PC-3 (cell line): ENCODE measurements at regions of chr20 and their contacts with region 1.

Region 1: DNA sequence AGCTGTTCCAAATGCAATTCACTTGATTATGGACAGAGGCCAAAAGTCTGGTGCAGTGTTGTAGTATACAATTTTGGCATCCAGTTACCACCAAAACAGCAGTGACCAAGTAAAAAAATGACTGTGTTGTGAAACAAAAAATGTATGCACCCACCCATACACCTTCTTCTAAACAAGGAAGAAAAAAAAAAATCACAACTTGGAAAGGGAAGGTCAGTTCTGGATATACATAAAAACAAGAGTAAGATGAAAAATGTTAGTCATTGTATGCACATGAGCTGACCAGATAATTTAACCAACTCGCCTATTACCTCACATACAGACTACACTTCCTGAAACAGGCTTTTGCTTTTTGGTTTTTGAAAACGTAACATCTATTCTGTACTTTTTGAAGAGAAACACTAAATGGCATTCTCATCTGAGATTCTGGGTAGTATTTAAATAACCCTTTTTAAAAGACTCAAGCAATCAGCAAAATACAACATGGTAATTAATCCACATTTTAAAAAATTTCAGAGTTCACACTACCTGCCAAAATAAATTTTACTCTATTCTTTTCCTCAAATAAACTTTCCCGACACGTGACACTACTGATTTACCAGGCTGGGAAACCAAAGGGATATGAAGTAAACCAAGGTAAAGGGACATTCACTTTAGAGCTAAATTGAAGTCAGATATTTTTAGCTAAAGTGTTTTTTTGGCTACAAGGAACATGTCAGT is 141.6 kb upstream of the SHLD1 start:
- DNase-seq: peak; percentile 63
- ATAC-seq: 0 out of 2 replicates have a peak, but pooled peaks have one; percentile 6
- H3K4me3 ChIP-seq: peak overlapping the region; percentile 77
- H3K27ac ChIP-seq: peak overlapping the region; percentile 71
- H3K4me1 ChIP-seq: peaks cover 40% of the 10 kb centered on the region
- H3K27me3 ChIP-seq: no peaks in the 10 kb centered on the region
- CTCF ChIP-seq: no peak

Region 2: DNA sequence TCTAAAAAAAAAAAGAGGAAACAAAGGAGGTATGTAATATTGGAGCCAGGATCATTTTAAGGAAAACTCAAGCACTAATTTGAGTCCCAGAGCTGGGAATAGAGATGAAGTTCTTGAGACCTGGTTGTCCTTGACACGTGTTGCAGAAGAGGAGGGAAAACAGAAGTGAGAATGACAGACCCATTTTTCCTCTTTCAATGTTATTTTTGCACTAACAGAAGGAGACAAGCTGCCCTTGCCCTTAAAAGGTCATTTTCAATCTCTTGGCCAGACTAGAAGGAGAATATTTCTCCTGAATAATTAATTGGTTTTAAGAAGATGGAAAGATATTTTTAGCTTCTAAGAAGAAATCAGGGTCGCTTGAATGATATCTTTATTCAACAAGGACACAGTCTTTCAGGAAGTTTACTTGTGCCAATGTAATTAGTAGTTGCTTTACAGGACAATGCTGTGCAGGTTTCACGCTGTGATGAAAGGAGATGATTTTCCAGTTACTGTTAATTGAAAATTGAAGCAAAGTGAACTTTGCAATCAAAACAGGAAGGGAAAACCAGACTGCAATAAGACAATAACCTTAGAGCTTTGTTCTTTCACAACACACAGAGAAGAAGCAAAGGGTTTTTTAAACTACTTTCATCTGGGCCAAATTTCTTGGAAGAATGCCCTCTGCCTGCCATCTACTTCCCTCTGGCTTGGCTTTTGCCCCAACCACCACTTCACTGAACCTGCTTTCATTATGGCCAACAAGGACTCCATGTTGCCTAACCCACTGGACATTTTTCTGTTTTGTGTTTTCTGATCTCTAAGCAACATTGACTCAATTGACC is 33.8 kb after region 1 on chr20:
- CTCF ChIA-PET with region 1: no interaction called
- POLR2A ChIA-PET with region 1: interaction called, 12 read pairs
- intact Hi-C with region 1: no loop called
- DNase-seq: no peak
- ATAC-seq: no peak
- H3K4me3 ChIP-seq: no peak overlapping the region
- H3K27ac ChIP-seq: no peak overlapping the region
- H3K4me1 ChIP-seq: peaks cover 15% of the 10 kb centered on the region
- H3K27me3 ChIP-seq: no peaks in the 10 kb centered on the region
- CTCF ChIP-seq: no peak

Region 3: GRCh38 chr20:5719861-5720401 is 111.3 kb after region 1 on chr20:
- CTCF ChIA-PET with region 1: no interaction called
- POLR2A ChIA-PET with region 1: no interaction called
- intact Hi-C with region 1: loop called (anchors 1 kb)
- DNase-seq: peak; percentile 92
- ATAC-seq: peak; percentile 32
- H3K4me3 ChIP-seq: no peak overlapping the region
- H3K27ac ChIP-seq: peak overlapping the region; percentile 50
- H3K4me1 ChIP-seq: peaks cover 40% of the 10 kb centered on the region
- H3K27me3 ChIP-seq: no peaks in the 10 kb centered on the region
- CTCF ChIP-seq: no peak